ENCODE measurements at regions of chrX and their contacts with region 1.

Region 1: DNA sequence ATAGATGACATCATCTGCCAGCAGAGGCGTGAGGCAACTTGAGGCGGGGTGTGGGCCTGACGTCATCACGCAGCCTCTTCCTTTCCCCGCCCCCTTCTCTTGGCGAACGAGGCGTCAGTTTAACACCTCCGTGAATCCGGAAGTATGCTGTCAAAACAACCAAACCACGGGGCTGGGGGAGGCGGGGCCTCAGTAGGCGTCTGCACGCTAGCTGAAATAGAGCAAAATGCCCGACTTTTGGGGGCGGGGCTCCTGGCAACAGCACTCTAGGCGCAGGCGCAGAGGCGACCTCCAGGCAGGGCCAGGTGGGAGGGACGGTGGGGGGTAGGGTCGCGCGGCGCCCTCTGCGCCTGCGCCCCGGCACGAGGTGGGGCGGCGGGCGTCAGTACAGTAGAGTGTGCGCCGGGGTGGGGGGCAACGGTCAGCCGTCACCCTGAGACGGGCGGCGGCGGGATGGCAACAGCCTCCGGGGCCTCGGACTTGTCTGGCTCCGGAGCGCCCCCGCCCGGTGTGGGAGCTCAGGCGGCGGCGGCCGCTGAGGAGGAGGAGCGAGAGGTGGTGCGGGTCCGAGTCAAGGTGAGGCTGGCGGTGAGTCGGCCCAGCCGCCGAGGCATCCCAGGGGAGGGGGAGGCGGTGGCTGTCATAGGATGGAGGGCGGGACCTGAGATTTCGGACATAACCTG is at the start of gene TBC1D25:
- DNase-seq: peak; percentile 90 to 99 (median 96)
- ATAC-seq: peak; percentile 83
- H3K4me3 ChIP-seq: peak within 1 kb of the TSS; percentile 75 to 80
- H3K4me3 Mint-ChIP-seq: peak within 1 kb of the TSS; percentile 90
- H3K27ac ChIP-seq: peak within 1 kb of the TSS; percentile 91 to 99
- H3K27ac Mint-ChIP-seq: peak within 1 kb of the TSS; percentile 97
- H3K4me1 ChIP-seq: peaks cover 15% of the 10 kb centered on the region
- H3K4me1 Mint-ChIP-seq: peaks cover 24% of the 10 kb centered on the region
- H3K27me3 ChIP-seq: no peaks in the 10 kb centered on the region
- H3K27me3 Mint-ChIP-seq: no peaks in the 10 kb centered on the region
- CTCF ChIP-seq: no peak
- total RNA-seq, gene TBC1D25: 30.1 to 33.4 TPM

Region 2: GRCh38 chrX:48083212-48083611 is 456.3 kb before region 1 on chrX:
- CTCF ChIA-PET with region 1: no interaction called
- POLR2A ChIA-PET with region 1: no interaction called
- intact Hi-C with region 1: loop called (anchors 5 to 10 kb)
- DNase-seq: peak; percentile 5 to 63 (median 39)
- ATAC-seq: peak; percentile 74
- H3K4me3 ChIP-seq: no peak overlapping the region
- H3K4me3 Mint-ChIP-seq: no peak overlapping the region
- H3K27ac ChIP-seq: no peak overlapping the region
- H3K27ac Mint-ChIP-seq: no peak overlapping the region
- H3K4me1 ChIP-seq: no peaks in the 10 kb centered on the region
- H3K4me1 Mint-ChIP-seq: no peaks in the 10 kb centered on the region
- H3K27me3 ChIP-seq: no peaks in the 10 kb centered on the region
- H3K27me3 Mint-ChIP-seq: no peaks in the 10 kb centered on the region
- CTCF ChIP-seq: peak; percentile 56

Region 3: DNA sequence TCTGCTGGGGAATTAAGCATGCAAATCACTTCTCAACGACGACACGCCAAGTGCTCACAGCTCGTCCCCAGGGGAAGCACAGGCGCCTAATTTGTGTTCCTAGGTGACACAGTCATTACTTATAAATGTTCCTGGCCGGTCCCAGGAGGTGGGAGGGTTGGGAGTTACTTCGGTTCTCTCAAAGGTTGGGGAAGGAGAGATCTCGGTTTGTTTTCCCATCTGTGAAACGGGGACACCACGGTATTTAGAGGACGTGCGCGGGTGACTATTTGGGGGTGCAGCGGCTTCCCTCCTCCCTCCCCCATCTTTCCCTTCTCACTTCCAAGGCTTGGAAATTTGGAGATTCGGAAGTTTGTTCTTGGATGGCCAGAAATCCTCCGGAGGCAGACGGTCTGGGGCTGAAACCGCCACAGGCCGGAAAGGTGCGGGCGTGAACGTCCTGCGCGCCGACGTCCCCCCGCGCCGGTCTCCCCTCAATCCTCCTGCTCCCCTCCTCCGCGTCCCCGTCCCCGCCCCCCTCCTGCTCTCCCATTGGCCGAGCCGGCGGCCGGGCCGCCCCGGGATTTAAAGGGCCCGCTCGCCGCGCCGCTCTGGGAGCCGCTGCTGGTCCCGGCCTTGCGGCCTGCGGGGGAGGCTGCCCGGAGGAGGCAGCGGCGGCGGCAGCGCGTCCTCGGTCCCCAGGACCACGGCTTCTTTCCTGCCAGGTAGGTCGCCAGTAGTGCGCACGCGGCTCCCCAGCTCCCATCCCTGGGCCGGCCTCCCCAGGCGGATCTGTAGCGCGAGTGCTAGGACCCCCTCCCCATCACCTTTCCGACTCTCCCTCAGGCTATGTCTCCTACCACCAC is 30.9 kb before region 1 on chrX and contains the start of gene PORCN:
- CTCF ChIA-PET with region 1: no interaction called
- POLR2A ChIA-PET with region 1: interaction called, 4 read pairs
- intact Hi-C with region 1: loop called (anchors 1 kb)
- DNase-seq: peak; percentile 56 to 85 (median 81)
- ATAC-seq: peak; percentile 93
- H3K4me3 ChIP-seq: peak within 1 kb of the TSS; percentile 76 to 79
- H3K4me3 Mint-ChIP-seq: peak within 1 kb of the TSS; percentile 90
- H3K27ac ChIP-seq: peak within 1 kb of the TSS; percentile 76 to 78
- H3K27ac Mint-ChIP-seq: peak within 1 kb of the TSS; percentile 94
- H3K4me1 ChIP-seq: peaks cover 6% of the 10 kb centered on the region
- H3K4me1 Mint-ChIP-seq: peaks cover 25% of the 10 kb centered on the region
- H3K27me3 ChIP-seq: no peaks in the 10 kb centered on the region
- H3K27me3 Mint-ChIP-seq: no peaks in the 10 kb centered on the region
- CTCF ChIP-seq: no peak
- total RNA-seq, gene PORCN: 18.3 to 19.8 TPM

Region 4: DNA sequence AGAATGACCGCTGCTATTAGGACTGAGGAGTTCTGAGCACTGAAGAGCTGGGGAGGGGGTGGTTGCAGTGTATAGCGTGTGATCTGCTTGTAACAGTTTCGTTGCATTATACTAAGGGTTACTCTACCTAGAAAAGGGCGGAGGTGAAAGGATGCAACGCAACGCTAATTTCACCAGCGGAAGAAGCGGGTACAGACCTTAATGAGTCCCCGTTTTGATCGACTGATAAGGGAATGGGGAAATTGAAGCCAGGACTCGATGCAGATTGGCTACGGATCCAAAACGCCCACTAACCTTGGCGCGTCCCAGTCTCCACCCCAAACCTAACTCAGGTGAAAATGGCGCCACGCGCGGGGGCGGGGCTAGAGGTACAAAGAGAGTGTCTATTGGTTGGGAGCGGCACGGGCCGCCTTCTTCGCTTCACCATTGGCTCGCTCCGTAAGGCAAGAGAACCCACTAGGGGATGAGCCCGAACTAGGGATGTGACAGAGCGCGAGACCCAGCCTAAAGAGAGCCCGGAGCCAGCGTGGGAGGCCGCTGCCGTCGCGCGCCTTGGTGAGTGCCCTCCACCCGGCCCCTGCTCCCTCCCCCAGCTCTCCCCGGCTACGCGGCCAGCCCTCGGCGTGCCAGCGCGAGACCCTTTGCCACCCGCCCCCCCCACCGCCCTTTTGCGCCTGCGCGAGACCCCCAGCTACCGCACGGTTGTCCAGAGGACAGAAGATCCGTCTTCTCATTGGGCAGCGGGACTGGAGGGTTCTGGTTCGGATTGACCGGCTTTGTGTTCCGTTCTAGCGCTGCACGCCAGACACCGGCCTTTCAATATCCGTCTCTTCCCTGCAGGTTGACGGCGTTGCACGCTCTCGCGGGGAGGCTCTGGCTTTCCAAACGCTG is 17.9 kb before region 1 on chrX and contains the start of gene EBP:
- CTCF ChIA-PET with region 1: no interaction called
- POLR2A ChIA-PET with region 1: no interaction called
- intact Hi-C with region 1: loop called (anchors 1 kb)
- DNase-seq: peak; percentile 85 to 96 (median 92)
- ATAC-seq: peak; percentile 96
- H3K4me3 ChIP-seq: peak within 1 kb of the TSS; percentile 72 to 83
- H3K4me3 Mint-ChIP-seq: peak within 1 kb of the TSS; percentile 87
- H3K27ac ChIP-seq: peak within 1 kb of the TSS; percentile 80 to 90
- H3K27ac Mint-ChIP-seq: peak within 1 kb of the TSS; percentile 95
- H3K4me1 ChIP-seq: peaks cover 19% of the 10 kb centered on the region
- H3K4me1 Mint-ChIP-seq: peaks cover 38% of the 10 kb centered on the region
- H3K27me3 ChIP-seq: no peaks in the 10 kb centered on the region
- H3K27me3 Mint-ChIP-seq: no peaks in the 10 kb centered on the region
- CTCF ChIP-seq: no peak
- total RNA-seq, gene EBP: 55.2 to 56.9 TPM

Region 5: GRCh38 chrX:48574270-48575266 is 35.1 kb after region 1 on chrX and contains the start of gene RBM3:
- CTCF ChIA-PET with region 1: interaction called, 3 read pairs
- POLR2A ChIA-PET with region 1: interaction called, 21 read pairs
- intact Hi-C with region 1: loop called (anchors 1 kb)
- DNase-seq: peak; percentile 80 to 97 (median 91)
- ATAC-seq: peak; percentile 91
- H3K4me3 ChIP-seq: peak within 1 kb of the TSS; percentile 70 to 97
- H3K4me3 Mint-ChIP-seq: peak within 1 kb of the TSS; percentile 97
- H3K27ac ChIP-seq: peak within 1 kb of the TSS; percentile 100
- H3K27ac Mint-ChIP-seq: peak within 1 kb of the TSS; percentile 99
- H3K4me1 ChIP-seq: peaks cover 24% of the 10 kb centered on the region
- H3K4me1 Mint-ChIP-seq: peaks cover 25% of the 10 kb centered on the region
- H3K27me3 ChIP-seq: no peaks in the 10 kb centered on the region
- H3K27me3 Mint-ChIP-seq: no peaks in the 10 kb centered on the region
- CTCF ChIP-seq: peak; percentile 21
- total RNA-seq, gene RBM3: 442 to 444 TPM

Region 6: DNA sequence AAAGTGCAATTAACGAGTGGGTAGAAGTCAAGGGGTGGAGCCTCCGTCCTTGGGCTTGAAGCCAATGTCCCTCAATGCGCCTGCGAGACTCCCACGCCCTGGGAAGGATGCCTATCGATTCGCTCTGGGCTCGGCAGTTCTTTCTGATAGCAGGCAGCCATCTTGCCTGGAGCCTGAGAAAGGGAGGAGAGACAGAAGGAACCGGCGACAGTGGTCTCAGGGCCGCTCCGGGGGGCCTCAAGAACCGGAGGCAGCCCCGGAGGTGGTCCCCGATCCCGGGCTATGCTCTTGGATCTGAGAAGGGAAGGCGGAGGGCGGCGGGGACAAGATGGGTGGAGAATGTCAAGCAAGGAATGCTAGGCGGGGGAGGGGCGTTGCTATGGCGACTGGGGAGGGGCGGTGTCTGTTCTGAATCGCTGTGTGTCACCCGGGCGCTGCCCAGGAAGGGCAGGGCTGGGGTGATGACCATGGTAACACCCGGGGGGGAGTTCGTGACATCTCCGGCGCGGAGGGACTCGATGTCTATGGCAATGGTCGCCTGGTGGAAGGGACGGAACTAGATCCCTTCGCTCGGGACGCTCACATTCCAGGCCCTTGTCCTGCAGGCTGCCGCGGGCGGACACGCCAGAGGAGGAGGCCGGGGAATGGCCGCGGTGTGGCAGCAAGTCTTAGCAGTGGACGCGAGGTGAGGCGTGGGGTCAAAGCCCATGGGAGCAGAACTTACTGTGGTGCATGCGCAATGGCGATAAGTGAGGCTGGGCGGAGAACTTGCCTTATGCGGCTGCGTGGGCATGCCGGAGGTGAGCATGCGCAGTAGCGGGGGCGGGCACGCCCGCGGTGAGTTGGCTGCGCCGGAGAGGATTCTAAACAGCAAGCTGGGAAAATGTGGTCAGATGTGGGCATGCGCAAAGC is 58.1 kb after region 1 on chrX and contains the start of gene WDR13:
- CTCF ChIA-PET with region 1: no interaction called
- POLR2A ChIA-PET with region 1: no interaction called
- intact Hi-C with region 1: loop called (anchors 1 to 2 kb)
- DNase-seq: peak; percentile 79 to 94 (median 90)
- ATAC-seq: peak; percentile 82
- H3K4me3 ChIP-seq: peak within 1 kb of the TSS; percentile 90 to 99
- H3K4me3 Mint-ChIP-seq: peak within 1 kb of the TSS; percentile 94
- H3K27ac ChIP-seq: peak within 1 kb of the TSS; percentile 100
- H3K27ac Mint-ChIP-seq: peak within 1 kb of the TSS; percentile 100
- H3K4me1 ChIP-seq: peaks cover 7% of the 10 kb centered on the region
- H3K4me1 Mint-ChIP-seq: peaks cover 10% of the 10 kb centered on the region
- H3K27me3 ChIP-seq: no peaks in the 10 kb centered on the region
- H3K27me3 Mint-ChIP-seq: no peaks in the 10 kb centered on the region
- CTCF ChIP-seq: no peak
- total RNA-seq, gene WDR13: 41.6 to 51.6 TPM

Region 7: GRCh38 chrX:48631350-48632090 is 92.0 kb after region 1 on chrX:
- CTCF ChIA-PET with region 1: no interaction called
- POLR2A ChIA-PET with region 1: no interaction called
- intact Hi-C with region 1: no loop called
- DNase-seq: peak; percentile 37 to 85 (median 61)
- ATAC-seq: peak; percentile 70
- H3K4me3 ChIP-seq: peak overlapping the region in 1 of 2 experiments; percentile 8
- H3K4me3 Mint-ChIP-seq: peak overlapping the region; percentile 42
- H3K27ac ChIP-seq: peak overlapping the region in 1 of 2 experiments; percentile 25
- H3K27ac Mint-ChIP-seq: peak overlapping the region; percentile 41
- H3K4me1 ChIP-seq: peaks cover 9% of the 10 kb centered on the region
- H3K4me1 Mint-ChIP-seq: peaks cover 11% of the 10 kb centered on the region
- H3K27me3 ChIP-seq: no peaks in the 10 kb centered on the region
- H3K27me3 Mint-ChIP-seq: no peaks in the 10 kb centered on the region
- CTCF ChIP-seq: no peak

Measured in CD8-positive, alpha-beta T cell (primary cell).